Aorta (tissue), 5 donors: ENCODE measurements at regions of chr3 and their contacts with region 1.

Region 1: DNA sequence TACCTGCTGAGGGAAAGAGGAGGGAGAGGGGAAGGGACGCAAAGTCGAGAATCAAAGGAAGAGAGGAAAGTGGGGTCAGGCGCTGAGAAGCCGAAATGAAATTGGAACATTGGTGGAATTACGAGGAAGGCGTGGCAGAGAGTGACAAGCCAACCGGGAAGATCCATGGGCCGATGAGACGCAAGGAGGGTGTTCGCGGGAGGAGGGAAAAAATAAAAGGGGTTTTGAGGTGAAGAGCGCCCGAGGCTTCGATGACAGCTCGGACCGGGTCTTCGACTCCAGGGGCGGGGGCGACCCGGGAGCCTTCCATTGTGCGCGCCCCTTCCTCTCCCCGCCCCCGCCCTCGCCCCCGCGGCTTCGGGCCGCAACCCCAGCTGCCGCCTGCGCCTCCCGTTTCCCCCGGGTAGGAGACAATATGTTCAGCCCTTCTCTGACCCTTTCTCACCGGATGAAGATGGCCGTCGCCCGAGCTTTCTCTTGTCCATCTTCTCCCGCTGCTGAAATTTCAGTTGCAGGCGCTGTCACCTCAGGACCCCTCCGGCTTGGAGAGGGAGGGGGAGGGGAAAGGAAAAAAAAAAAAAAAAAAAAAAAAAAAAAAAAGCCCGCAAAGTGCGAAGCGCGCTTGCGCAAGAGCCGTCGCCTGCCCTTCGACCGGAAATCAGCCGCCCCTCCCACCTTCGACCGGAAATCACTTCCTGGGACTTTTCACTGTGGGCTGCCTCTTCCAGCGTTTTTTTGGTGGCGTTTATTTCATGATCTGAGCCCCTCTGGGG is at the start of gene SENP7:
- DNase-seq: peak; percentile 92 to 95
- ATAC-seq: peak; percentile 89
- H3K4me3 ChIP-seq: peak within 1 kb of the TSS; percentile 90 to 96
- H3K27ac ChIP-seq: peak within 1 kb of the TSS; percentile 37 to 77
- H3K4me1 ChIP-seq: no peaks in the 10 kb centered on the region
- H3K27me3 ChIP-seq: no peaks in the 10 kb centered on the region
- total RNA-seq, gene SENP7: 25.6 to 32.4 TPM

Region 2: DNA sequence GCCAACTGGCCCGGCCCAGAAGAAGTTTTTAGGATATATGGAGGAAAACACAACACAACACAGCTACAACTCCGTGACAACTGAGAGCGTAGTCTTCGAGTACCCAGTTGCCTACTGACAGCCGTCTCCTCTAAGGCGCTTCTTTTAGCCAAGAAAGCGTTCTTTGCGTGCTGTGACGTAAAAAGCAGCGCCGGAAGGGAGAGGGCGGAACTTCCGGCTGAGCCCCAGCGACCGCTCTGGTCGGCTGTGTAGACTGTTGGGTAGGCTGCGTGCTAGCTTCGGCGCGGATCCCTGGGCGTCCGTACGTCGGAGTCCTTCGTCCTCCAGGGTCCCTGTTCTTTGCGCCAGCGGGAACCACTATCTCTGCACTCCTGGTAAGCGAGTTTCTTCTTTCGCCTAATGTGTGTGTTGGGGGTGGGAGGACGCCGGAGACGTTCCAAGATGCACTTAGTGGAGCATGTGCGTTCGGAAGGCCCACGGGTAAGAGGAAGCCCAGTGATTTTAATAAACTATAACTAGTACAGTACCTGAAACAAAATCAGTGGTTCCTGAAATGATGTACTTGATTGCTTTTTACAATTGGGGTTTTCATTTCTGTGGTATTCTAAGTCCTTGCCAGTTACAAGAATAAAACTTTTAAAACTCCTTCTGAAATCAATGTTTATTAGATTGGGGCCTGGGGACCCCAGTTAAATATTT is 48.9 kb after region 1 on chr3 and contains the start of gene TRMT10C:
- intact Hi-C with region 1: loop called in 1 of 2 experiments (anchors 5 kb)
- DNase-seq: peak; percentile 94 to 97
- ATAC-seq: peak; percentile 97
- H3K4me3 ChIP-seq: peak within 1 kb of the TSS; percentile 55 to 92
- H3K27ac ChIP-seq: peak within 1 kb of the TSS in 1 of 2 donors; percentile 91
- H3K4me1 ChIP-seq: peaks cover 0 to 3% of the 10 kb centered on the region in 2 donors
- H3K27me3 ChIP-seq: no peaks in the 10 kb centered on the region
- total RNA-seq, gene TRMT10C: 14.8 to 15.0 TPM